Right ventricle myocardium superior (tissue), 1 donor: ENCODE measurements at regions of chr16 and their contacts with region 1.

Region 1: GRCh38 chr16:30355144-30355894 is at the start of gene CD2BP2:
- DNase-seq: peak; percentile 97
- ATAC-seq: peak; percentile 92
- total RNA-seq, gene CD2BP2: 34.1 TPM

Region 2: GRCh38 chr16:30407102-30407803 is 51.9 kb after region 1 on chr16 and contains the start of gene ZNF771:
- intact Hi-C with region 1: loop called (anchors 10 kb)
- DNase-seq: peak; percentile 97
- ATAC-seq: peak; percentile 98
- total RNA-seq, gene ZNF771: 6.2 TPM